Sciatic nerve (tissue), 2 donors: ENCODE measurements at regions of chr16 and their contacts with region 1.

Region 1: DNA sequence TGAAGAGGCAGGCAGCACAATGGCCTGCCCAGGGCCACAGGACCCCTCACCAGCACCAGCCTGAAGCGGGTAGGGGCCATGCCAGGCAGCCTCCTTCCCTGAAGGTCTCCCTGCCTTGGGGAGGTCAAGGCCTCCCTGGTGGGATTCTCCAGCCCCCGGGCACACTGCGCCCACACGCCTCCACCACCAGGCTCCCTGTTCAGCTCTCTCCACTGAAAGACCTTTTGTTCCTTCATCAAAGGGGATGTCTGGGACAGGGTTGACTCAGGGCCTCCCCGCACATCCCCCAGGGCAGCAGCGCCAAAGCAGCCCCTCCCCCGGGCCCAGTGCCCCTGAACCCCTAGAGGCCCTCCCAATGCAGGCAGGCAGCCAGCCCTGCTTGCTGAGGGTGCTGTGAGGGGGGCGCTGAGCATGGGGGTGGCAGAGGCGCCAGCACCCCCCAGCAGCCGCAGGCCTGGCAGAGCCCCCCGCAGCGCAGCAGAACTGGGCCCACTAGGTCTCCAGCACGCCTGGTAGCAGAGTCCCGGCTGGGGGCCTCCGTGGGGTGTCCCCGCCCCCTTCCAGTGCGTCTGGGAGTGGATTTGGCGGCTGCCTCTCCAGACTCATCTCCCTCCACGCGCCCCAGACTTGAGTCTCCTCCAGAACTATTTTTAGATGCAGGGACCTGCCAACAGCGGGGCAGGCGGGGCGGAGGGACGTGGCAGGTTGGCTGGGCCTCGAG is 13.1 kb downstream of the BCAR1 start:
- DNase-seq: peak; percentile 82
- ATAC-seq: peak; percentile 69

Region 2: DNA sequence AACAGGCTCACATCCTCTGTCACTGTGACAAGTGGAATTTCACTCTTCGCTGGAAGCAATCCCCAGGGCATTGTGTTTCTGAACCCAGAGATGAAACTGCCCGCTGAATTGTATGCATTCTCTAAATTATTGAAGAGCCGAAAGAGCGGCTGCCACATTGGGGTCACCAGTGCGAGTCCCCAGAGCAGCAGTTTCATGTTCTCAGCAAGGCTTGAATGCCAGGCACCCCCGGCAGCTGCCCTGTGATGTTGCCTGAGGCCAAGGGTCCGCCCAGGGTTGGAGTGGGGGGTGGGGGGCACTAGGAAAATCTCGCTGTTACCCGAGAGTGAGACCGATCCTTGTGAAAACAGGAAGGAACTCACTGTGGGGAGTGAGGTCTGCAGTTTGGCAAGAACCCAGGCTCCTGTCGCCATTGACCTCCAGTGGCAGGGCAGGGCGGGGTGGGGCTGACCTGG is 33.8 kb after region 1 on chr16:
- intact Hi-C with region 1: no loop called
- DNase-seq: no peak
- ATAC-seq: no peak

Region 3: DNA sequence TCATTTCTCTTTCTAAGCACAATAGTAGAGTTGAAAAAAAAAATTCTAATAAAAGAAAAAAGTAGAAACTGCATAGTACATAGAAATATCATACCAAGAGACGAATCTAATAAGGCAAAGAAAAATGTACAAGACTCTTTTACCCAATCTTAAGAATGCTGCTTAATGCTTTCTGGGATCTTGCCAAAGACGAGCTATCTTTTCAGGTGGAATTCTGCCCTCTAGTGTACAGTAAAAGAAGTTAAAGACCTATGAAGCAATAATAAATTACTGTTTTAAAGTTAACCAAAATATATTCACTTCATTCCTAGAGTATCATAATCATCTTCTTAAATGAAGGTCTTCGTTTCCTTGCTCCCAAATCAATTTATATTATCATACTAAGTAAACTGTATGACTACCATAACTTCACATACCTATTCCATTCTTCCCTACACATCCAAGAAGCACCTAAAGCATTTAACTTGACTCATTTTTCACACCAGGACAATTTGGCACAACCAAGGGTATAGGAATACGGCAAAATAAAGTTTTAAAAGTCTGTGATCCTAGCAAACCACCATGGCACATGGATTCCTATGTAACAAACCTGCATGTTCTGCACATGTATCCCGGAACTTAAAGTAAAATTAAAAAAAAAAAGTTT is 147.3 kb after region 1 on chr16:
- intact Hi-C with region 1: loop called (anchors 10 kb)
- DNase-seq: no peak
- ATAC-seq: peak; percentile 38

Region 4: GRCh38 chr16:75555707-75556430 is 317.6 kb after region 1 on chr16 and contains the start of gene TMEM231:
- intact Hi-C with region 1: no loop called
- DNase-seq: peak; percentile 98
- ATAC-seq: peak; percentile 98
- total RNA-seq, gene TMEM231: 13.7 TPM